Ascending aorta (tissue), 2 donors: ENCODE measurements at regions of chr10 and their contacts with region 1.

Region 1: GRCh38 chr10:99732033-99732912 is at the starts of genes COX15 and CUTC:
- DNase-seq: peak; percentile 87 to 98
- H3K4me3 ChIP-seq: peak within 1 kb of the TSS; percentile 76 to 88
- H3K27ac ChIP-seq: peak within 1 kb of the TSS; percentile 85 to 91
- H3K4me1 ChIP-seq: peaks cover 0 to 15% of the 10 kb centered on the region in 2 donors
- H3K27me3 ChIP-seq: no peaks in the 10 kb centered on the region
- CTCF ChIP-seq: peak in 1 of 3 experiments; percentile 23
- total RNA-seq, gene COX15: 22.0 TPM
- total RNA-seq, gene CUTC: 8.0 TPM

Region 2: GRCh38 chr10:98134431-98135221 is 1597.6 kb before region 1 on chr10 and contains the start of gene R3HCC1L:
- intact Hi-C with region 1: loop called (anchors 10 kb)
- DNase-seq: peak; percentile 60 to 95
- H3K4me3 ChIP-seq: peak within 1 kb of the TSS; percentile 69 to 92
- H3K27ac ChIP-seq: peak within 1 kb of the TSS; percentile 81 to 86
- H3K4me1 ChIP-seq: peaks cover 0 to 6% of the 10 kb centered on the region in 2 donors
- H3K27me3 ChIP-seq: no peaks in the 10 kb centered on the region
- CTCF ChIP-seq: peak in 1 of 3 experiments; percentile 4
- total RNA-seq, gene R3HCC1L: 3.1 TPM

Region 3: DNA sequence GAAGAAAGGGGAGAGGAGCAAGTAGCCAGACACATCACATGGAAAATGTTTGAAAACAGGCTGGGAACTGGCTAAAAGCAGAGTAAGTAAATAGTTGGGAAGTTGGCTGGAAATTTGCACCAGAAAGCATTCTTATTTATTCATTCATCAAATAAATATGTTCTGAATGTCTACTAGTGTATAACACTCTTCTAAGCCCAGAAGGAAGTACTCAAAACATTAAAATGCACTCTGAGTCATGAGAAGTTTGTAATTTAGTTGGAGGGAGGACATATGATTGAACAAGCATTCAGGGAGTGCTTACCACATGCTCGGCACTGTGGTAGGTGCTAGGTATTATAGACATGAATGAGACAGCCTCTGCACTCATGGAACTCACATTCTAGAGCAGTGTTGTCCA is 440.1 kb before region 1 on chr10:
- intact Hi-C with region 1: no loop called
- DNase-seq: no peak
- H3K4me3 ChIP-seq: no peak overlapping the region
- H3K27ac ChIP-seq: no peak overlapping the region
- H3K4me1 ChIP-seq: no peaks in the 10 kb centered on the region
- H3K27me3 ChIP-seq: no peaks in the 10 kb centered on the region
- CTCF ChIP-seq: no peak

Region 4: DNA sequence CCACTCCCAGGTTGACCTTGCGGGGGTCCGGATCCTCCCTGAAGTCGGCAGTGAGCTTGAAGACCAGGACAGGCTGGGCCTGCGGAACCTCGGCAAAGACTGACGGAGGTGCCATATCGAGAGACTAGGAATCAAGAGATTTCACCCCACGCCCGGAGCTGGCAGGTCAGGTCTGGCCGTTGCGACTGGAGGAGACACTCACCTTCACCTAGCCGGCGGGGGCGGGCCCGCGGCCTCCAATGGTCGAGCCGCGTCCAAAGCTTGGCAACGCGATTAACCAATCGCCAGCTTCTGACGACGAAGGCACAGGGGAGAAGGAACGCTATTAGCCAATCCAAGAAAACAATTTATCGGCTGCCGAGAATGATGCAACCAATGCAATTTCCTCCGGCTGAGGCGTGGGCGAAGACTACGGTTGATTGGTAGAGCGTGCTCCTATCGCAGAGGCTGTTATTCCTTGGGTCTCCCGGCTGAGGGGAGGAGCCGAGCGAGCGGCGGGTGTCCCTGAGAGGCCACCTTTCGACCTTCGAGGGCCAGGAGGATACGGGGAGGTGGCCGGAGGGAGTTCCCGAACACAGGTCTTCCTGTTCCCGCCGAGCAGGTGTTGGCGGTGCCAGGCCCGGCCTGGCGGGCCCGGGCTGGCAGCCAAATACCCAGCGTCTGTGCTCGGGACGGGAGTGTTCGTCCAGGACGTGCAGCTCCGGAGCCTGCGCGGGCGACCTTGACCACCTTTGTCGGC is 301.7 kb before region 1 on chr10 and contains the start of gene GOT1:
- intact Hi-C with region 1: loop called (anchors 2 kb)
- DNase-seq: peak; percentile 92 to 98
- H3K4me3 ChIP-seq: peak within 1 kb of the TSS; percentile 72 to 96
- H3K27ac ChIP-seq: peak within 1 kb of the TSS; percentile 74 to 77
- H3K4me1 ChIP-seq: peaks cover 7 to 10% of the 10 kb centered on the region in 2 donors
- H3K27me3 ChIP-seq: no peaks in the 10 kb centered on the region
- CTCF ChIP-seq: no peak
- total RNA-seq, gene GOT1: 4.4 TPM

Region 5: DNA sequence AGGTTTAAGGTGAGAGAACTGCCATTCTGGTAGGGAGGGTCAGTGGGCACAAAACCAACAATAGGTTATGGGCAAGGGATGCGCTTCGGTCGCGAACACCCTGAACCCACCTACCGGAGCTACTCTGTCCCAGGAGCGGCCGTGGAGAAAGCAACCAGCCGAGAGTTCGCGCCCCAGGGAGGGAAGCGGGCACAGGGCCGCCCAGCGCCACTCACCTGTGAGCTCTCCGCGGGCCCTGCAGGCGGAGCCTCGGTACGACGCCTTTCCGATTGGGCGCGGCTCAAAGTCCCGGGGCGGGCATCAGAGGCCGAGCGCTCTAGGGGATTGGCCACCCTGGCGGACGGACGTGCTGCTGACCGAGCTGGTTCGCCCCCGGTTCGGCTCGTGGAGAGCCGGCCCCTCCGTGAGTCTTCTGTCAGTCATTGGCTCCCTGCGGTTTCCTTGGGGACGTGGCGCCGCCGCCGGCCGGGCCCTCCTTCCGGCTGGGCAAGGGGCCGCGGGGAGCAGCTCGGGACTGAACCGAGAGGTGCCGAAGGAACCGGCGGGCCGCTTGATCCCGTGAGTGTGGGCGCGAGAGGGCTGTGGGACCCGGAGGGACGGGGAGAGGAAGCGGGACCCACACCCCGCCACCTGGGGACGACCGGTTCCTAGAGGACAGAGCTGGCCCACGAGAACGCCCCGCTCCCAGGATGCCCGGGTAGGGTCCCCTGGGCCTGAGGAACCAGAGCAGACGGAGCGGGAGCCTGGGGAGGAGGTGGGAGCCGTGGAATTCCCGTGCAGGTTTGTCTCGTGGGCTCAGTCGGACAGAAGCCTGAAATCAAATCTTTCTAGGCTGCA is 73.0 kb before region 1 on chr10 and contains the start of gene ENTPD7:
- intact Hi-C with region 1: loop called (anchors 1 kb)
- DNase-seq: peak; percentile 79 to 95
- H3K4me3 ChIP-seq: peak within 1 kb of the TSS; percentile 71 to 84
- H3K27ac ChIP-seq: no peak within 1 kb of the TSS
- H3K4me1 ChIP-seq: peaks cover 0 to 7% of the 10 kb centered on the region in 2 donors
- H3K27me3 ChIP-seq: no peaks in the 10 kb centered on the region
- CTCF ChIP-seq: peak; percentile 18 to 45 (median 39)
- total RNA-seq, gene ENTPD7: 9.9 TPM

Region 6: DNA sequence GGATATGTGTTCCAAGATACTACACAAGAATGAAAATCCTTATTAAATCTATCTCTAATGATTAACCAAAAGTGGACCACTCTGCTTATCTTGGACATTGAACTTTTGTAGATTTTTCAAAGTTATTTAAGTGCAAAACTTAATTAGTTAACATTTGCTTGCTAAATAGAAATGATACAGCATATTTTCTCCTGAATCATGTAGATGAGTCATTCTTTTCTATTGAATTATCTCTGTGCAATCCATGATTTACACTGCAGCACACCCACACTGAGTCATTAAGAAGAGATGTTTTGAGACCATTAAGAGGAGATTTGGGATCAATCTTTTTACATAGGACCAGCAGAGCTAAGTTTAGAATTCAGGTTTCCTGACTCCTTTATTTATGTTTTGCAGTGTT is 43.6 kb after region 1 on chr10:
- intact Hi-C with region 1: no loop called
- DNase-seq: no peak
- H3K4me3 ChIP-seq: no peak overlapping the region
- H3K27ac ChIP-seq: no peak overlapping the region
- H3K4me1 ChIP-seq: no peaks in the 10 kb centered on the region
- H3K27me3 ChIP-seq: no peaks in the 10 kb centered on the region
- CTCF ChIP-seq: no peak

Region 7: DNA sequence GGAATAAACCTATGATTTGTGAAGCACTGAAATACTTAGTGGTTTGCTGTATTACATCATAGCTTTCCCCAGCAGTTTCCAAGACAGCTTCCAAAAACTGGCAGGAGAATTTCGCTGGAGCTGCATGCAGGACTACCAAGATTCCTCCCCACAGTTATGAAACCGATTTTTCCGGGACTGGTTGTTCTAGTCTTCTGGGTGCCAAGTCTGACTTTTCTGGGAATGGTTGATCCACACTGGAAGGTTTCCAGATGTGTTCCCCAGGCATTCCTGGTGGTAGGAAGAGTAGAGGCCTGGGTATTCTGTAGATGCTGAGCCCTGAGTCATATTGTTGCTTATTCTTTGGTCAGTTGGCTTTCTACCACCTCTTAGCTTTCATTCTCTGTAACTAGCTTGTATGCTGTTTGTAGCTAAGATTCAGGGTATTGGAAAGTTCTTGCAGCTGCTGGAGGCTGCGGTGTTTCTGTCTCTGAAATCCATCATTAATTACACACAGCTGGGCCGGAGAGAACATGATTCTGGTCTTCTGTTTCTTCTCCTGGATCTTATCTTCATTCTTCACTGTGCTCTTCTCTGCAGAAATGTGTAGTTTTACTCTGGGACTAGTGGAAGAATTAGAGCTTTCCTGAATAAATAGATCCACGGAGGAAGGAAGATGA is 56.5 kb after region 1 on chr10:
- intact Hi-C with region 1: loop called (anchors 5 kb)
- DNase-seq: peak; percentile 10 to 81
- H3K4me3 ChIP-seq: no peak overlapping the region
- H3K27ac ChIP-seq: peak overlapping the region; percentile 52 to 59
- H3K4me1 ChIP-seq: peaks cover 0 to 4% of the 10 kb centered on the region in 2 donors
- H3K27me3 ChIP-seq: no peaks in the 10 kb centered on the region
- CTCF ChIP-seq: no peak

Region 8: GRCh38 chr10:100009793-100010676 is 277.8 kb after region 1 on chr10 and contains the start of gene DNMBP:
- intact Hi-C with region 1: loop called (anchors 1 kb)
- DNase-seq: peak; percentile 14 to 89
- H3K4me3 ChIP-seq: peak within 1 kb of the TSS; percentile 78 to 98
- H3K27ac ChIP-seq: peak within 1 kb of the TSS; percentile 65 to 80
- H3K4me1 ChIP-seq: peaks cover 3 to 19% of the 10 kb centered on the region in 2 donors
- H3K27me3 ChIP-seq: no peaks in the 10 kb centered on the region
- CTCF ChIP-seq: peak; percentile 35 to 85 (median 49)
- total RNA-seq, gene DNMBP: 15.9 TPM